Activated CD4-positive, alpha-beta memory T cell treated with anti-CD3 and anti-CD28 coated beads, Interleukin-2, amount 10 ng/mL, durations not matched to agents 7 days and 5 days (primary cell): ENCODE measurements at regions of chr17 and their contacts with region 1.

Region 1: GRCh38 chr17:60720763-60721531 is 43.3 kb downstream of the BCAS3 start:
- DNase-seq: peak; percentile 30
- H3K4me3 Mint-ChIP-seq: no peak overlapping the region
- H3K27ac Mint-ChIP-seq: no peak overlapping the region
- H3K4me1 Mint-ChIP-seq: no peaks in the 10 kb centered on the region
- H3K27me3 Mint-ChIP-seq: no peaks in the 10 kb centered on the region

Region 2: DNA sequence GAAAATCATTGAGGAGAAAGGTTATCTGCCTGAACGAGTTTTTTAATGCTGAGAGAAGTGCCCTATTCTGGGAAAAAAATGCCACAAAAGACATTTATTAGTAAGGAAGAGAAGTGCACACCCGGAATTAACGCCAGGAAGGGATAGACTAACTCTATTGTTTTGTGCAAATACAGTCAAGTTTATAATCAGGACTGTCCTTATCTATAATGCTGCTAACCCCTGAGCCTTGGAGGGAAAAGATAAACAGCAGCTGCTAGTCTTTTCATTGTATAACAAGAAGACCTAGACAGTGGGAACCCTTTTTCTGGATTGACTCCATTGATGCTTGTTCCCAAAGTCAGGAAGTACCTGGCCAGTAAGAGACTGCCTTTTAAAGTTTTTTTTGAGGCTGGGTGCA is 16.8 kb before region 1 on chr17:
- CTCF ChIA-PET with region 1: interaction called, 16 read pairs
- POLR2A ChIA-PET with region 1: no interaction called
- DNase-seq: no peak
- H3K4me3 Mint-ChIP-seq: no peak overlapping the region
- H3K27ac Mint-ChIP-seq: no peak overlapping the region
- H3K4me1 Mint-ChIP-seq: no peaks in the 10 kb centered on the region
- H3K27me3 Mint-ChIP-seq: no peaks in the 10 kb centered on the region